Activated T-helper 1 cell treated with anti-CD3 and anti-CD28 coated beads, Interleukin-12 subunit alpha, Interleukin-12 subunit beta, Interleukin-2, Interleukin-4 antibody, amounts not matched to agents 30 ng/mL and 10 ng/mL and 1 ng/mL, durations not matched to agents 14 hours and 24 hours and 36 hours (primary cell): ENCODE measurements at regions of chr1 and their contacts with region 1.

Region 1: GRCh38 chr1:151281969-151282882 is at the start of gene ZNF687:
- DNase-seq: peak; percentile 98
- H3K4me3 Mint-ChIP-seq: peak within 1 kb of the TSS; percentile 94
- H3K27ac Mint-ChIP-seq: peak within 1 kb of the TSS; percentile 100
- H3K4me1 Mint-ChIP-seq: peaks cover 36% of the 10 kb centered on the region
- H3K27me3 Mint-ChIP-seq: no peaks in the 10 kb centered on the region
- total RNA-seq, gene ZNF687: 26.9 and 27.3 TPM in 2 replicates

Region 2: GRCh38 chr1:151008190-151008860 is 273.9 kb before region 1 on chr1 and contains the start of gene PRUNE1:
- intact Hi-C with region 1: loop called (anchors 2 kb)
- DNase-seq: peak; percentile 94
- H3K4me3 Mint-ChIP-seq: peak within 1 kb of the TSS; percentile 100
- H3K27ac Mint-ChIP-seq: peak within 1 kb of the TSS; percentile 96
- H3K4me1 Mint-ChIP-seq: peaks cover 79% of the 10 kb centered on the region
- H3K27me3 Mint-ChIP-seq: no peaks in the 10 kb centered on the region
- total RNA-seq, gene PRUNE1: 15.0 and 15.4 TPM in 2 replicates

Region 3: GRCh38 chr1:151156515-151156819 is 125.8 kb before region 1 on chr1 and contains the start of gene TNFAIP8L2:
- intact Hi-C with region 1: loop called (anchors 1 kb)
- DNase-seq: peak; percentile 72
- H3K4me3 Mint-ChIP-seq: peak within 1 kb of the TSS; percentile 92
- H3K27ac Mint-ChIP-seq: peak within 1 kb of the TSS; percentile 99
- H3K4me1 Mint-ChIP-seq: peaks cover 42% of the 10 kb centered on the region
- H3K27me3 Mint-ChIP-seq: no peaks in the 10 kb centered on the region
- total RNA-seq, gene TNFAIP8L2: 38.0 and 38.5 TPM in 2 replicates

Region 4: GRCh38 chr1:151198255-151199127 is 83.7 kb before region 1 on chr1 and contains the start of gene PIP5K1A:
- intact Hi-C with region 1: loop called (anchors 1 kb)
- DNase-seq: peak; percentile 97
- H3K4me3 Mint-ChIP-seq: peak within 1 kb of the TSS; percentile 94
- H3K27ac Mint-ChIP-seq: peak within 1 kb of the TSS; percentile 94
- H3K4me1 Mint-ChIP-seq: peaks cover 35% of the 10 kb centered on the region
- H3K27me3 Mint-ChIP-seq: peaks cover 7% of the 10 kb centered on the region
- total RNA-seq, gene PIP5K1A: 98.9 and 101 TPM in 2 replicates

Region 5: DNA sequence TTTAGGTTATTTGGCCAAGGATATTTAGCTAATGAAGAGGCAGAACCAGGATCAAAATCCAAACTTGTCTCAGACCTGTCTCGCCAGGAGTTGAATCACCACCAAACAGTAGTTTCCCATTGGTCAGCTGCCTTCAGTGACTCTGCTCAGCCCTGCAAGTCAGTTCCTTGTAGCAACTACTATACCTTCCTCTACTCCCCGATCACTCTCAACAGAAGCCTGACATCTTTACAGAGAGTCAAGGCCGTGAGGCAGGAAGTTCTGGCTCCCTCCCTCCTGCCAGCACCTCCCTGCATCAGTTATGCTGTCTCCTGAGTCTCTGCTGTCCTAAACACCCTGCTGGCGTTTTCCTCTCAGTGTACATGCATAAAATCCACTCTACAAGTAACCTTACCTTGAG is 14.5 kb before region 1 on chr1:
- intact Hi-C with region 1: no loop called
- DNase-seq: no peak
- H3K4me3 Mint-ChIP-seq: no peak overlapping the region
- H3K27ac Mint-ChIP-seq: no peak overlapping the region
- H3K4me1 Mint-ChIP-seq: no peaks in the 10 kb centered on the region
- H3K27me3 Mint-ChIP-seq: no peaks in the 10 kb centered on the region

Region 6: GRCh38 chr1:151327223-151327902 is 45.1 kb after region 1 on chr1 and contains the start of gene PI4KB:
- intact Hi-C with region 1: loop called (anchors 1 kb)
- DNase-seq: peak; percentile 86
- H3K4me3 Mint-ChIP-seq: peak within 1 kb of the TSS; percentile 91
- H3K27ac Mint-ChIP-seq: peak within 1 kb of the TSS; percentile 90
- H3K4me1 Mint-ChIP-seq: peaks cover 40% of the 10 kb centered on the region
- H3K27me3 Mint-ChIP-seq: peaks cover 1% of the 10 kb centered on the region
- total RNA-seq, gene PI4KB: 52.4 and 54.7 TPM in 2 replicates

Region 7: GRCh38 chr1:151399890-151400495 is 117.8 kb after region 1 on chr1:
- intact Hi-C with region 1: loop called (anchors 1 kb)
- DNase-seq: no peak
- H3K4me3 Mint-ChIP-seq: peak overlapping the region; percentile 92
- H3K27ac Mint-ChIP-seq: peak overlapping the region; percentile 99
- H3K4me1 Mint-ChIP-seq: peaks cover 27% of the 10 kb centered on the region
- H3K27me3 Mint-ChIP-seq: peaks cover 3% of the 10 kb centered on the region

Region 8: GRCh38 chr1:151611832-151612500 is 329.7 kb after region 1 on chr1 and contains the start of gene SNX27:
- intact Hi-C with region 1: loop called (anchors 1 kb)
- DNase-seq: peak; percentile 80
- H3K4me3 Mint-ChIP-seq: peak within 1 kb of the TSS; percentile 99
- H3K27ac Mint-ChIP-seq: peak within 1 kb of the TSS; percentile 95
- H3K4me1 Mint-ChIP-seq: peaks cover 38% of the 10 kb centered on the region
- H3K27me3 Mint-ChIP-seq: peaks cover 5% of the 10 kb centered on the region
- total RNA-seq, gene SNX27: 31.1 and 31.9 TPM in 2 replicates